ENCODE measurements at regions of chr7 and their contacts with region 1.

Region 1: GRCh38 chr7:132580717-132581285 is 4.5 kb upstream of the PLXNA4 start:
- DNase-seq: peak; percentile 75
- H3K4me3 ChIP-seq: no peak overlapping the region
- H3K27ac ChIP-seq: no peak overlapping the region
- H3K4me1 ChIP-seq: no peaks in the 10 kb centered on the region
- H3K27me3 ChIP-seq: peaks cover 27% of the 10 kb centered on the region

Region 2: DNA sequence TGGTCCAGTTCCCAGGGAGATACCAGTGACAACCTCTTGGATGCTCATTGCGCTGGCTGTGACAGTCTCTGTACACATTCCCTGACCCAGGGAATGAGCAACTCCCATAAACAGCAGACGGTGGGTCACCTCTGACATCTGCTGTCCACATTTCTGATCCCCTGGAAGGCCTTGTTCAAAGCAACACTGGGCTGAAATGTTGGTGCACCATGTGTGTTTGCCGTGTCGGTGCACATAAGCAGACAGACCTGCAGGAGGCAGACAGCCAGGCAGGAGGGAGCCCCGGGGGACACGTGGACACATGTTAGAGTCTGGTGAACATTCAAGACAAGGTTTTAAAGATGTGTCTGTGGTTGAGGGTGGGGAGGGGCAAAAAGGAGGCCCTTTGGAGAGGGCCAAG is 259.4 kb before region 1 on chr7:
- in situ Hi-C with region 1: loop called (anchors 10 kb)
- DNase-seq: peak; percentile 9
- H3K4me3 ChIP-seq: no peak overlapping the region
- H3K27ac ChIP-seq: no peak overlapping the region
- H3K4me1 ChIP-seq: no peaks in the 10 kb centered on the region
- H3K27me3 ChIP-seq: no peaks in the 10 kb centered on the region; the same call in 1 of the 2 replicates